Dorsolateral prefrontal cortex (tissue), 120 donors: ENCODE measurements at regions of chr6 and their contacts with region 1.

Region 1: GRCh38 chr6:131182991-131183425 is 47.7 kb downstream of the AKAP7 start:
- DNase-seq: no peak
- H3K4me3 ChIP-seq: peak overlapping the region in 24 of 59 donors; percentile 1 to 56 (median 28)
- H3K27ac ChIP-seq: peak overlapping the region in 8 of 59 donors; percentile 6 to 62 (median 36)
- H3K27me3 ChIP-seq: no peaks in the 10 kb centered on the region
- CTCF ChIP-seq: peak; percentile 47 to 79 (median 64)

Region 2: DNA sequence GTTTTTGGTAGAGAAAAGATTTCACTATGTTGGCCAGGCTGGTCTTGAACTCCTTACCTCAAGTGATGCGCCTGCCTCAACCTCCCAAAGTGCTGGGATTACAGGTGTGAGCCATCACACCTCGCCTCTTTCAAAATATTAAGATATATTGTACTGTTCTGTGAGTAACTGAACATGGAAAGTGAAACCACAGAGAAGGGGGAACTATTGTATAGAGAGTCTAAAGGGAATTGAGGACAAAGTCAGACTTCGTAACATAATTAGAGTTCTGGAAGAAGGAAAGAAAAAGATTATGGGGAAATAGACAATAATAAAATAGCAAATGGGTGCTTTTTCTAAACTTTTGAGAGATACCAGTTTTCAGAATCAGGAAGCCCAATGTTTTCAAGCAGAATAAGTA is 65.1 kb before region 1 on chr6:
- intact Hi-C with region 1: no loop called
- DNase-seq: no peak
- H3K4me3 ChIP-seq: no peak overlapping the region
- H3K27ac ChIP-seq: no peak overlapping the region
- H3K27me3 ChIP-seq: no peaks in the 10 kb centered on the region
- CTCF ChIP-seq: no peak

Region 3: GRCh38 chr6:131250122-131250521 is 67.1 kb after region 1 on chr6:
- intact Hi-C with region 1: no loop called
- DNase-seq: peak; percentile 21 to 71 (median 60)
- H3K4me3 ChIP-seq: peak overlapping the region in 58 of 59 donors; percentile 29 to 73 (median 54)
- H3K27ac ChIP-seq: peak overlapping the region in 52 of 59 donors; percentile 3 to 85 (median 53)
- H3K27me3 ChIP-seq: no peaks in the 10 kb centered on the region
- CTCF ChIP-seq: peak in 13 of 56 donors; percentile 3 to 34 (median 12)

Region 4: DNA sequence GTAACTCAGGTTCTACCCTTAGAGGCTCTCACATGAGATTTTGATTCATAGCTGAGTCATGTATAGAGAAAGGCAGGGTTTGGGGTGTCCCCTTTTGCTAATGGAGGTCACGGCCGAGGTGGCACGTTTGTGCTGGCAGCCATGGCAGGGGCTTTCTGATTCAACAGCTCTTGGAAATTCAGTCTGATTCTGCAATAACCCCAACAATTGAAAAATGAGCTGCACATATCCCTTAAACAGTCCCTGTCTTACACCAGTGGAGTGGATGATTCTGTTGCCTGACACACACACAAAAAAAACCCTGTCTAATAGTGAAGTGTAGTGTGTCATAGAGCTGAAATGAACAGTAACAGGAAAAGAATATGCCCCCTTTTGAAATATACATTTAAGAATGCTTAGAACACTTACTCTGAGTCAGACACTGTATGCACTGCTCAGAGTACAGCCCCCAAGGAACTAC is 349.6 kb after region 1 on chr6:
- intact Hi-C with region 1: loop called (anchors 2 to 5 kb)
- DNase-seq: no peak
- H3K4me3 ChIP-seq: no peak overlapping the region
- H3K27ac ChIP-seq: no peak overlapping the region
- H3K27me3 ChIP-seq: peaks cover 0 to 3% (median 0%) of the 10 kb centered on the region in 45 donors
- CTCF ChIP-seq: no peak